ENCODE measurements at regions of chr17 and their contacts with region 1.

Region 1: DNA sequence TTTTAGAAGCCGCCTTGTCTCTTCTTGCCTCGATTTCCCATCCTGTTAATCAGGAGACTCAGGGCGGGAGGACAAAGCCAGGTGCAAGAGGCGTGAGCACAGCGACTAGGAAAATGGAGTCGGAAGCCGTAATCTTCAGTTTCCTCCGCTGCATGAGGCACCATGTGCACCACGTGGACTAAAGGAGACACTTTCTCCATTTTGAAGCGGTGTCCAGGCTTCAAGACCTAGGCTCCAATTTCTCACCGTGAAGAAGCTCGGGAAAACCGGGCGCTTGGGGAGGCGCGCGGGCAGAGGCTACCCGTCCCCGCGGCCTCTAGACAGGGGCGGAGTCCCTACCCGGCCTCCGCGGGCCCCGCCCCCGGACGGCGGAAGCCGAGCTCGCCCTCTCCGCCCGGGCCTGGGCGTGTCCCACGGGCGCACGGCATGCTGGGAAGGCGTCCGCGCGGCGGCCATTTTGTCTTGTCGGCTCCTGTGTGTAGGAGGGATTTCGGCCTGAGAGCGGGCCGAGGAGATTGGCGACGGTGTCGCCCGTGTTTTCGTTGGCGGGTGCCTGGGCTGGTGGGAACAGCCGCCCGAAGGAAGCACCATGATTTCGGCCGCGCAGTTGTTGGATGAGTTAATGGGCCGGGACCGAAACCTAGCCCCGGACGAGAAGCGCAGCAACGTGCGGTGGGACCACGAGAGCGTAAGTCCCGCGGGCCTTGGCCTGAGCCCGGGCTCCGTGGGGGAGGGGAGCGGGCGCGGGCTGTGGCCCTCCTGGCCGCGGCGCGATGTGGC is at the start of gene LUC7L3:
- DNase-seq: peak; percentile 96
- ATAC-seq: peak; percentile 93
- H3K4me3 ChIP-seq: peak within 1 kb of the TSS; percentile 75 to 97 (median 87)
- H3K4me3 Mint-ChIP-seq: peak within 1 kb of the TSS; percentile 98
- H3K27ac ChIP-seq: peak within 1 kb of the TSS; percentile 96 to 97
- H3K27ac Mint-ChIP-seq: peak within 1 kb of the TSS; percentile 99
- H3K4me1 ChIP-seq: peaks cover 31 to 32% of the 10 kb centered on the region in 2 donors
- H3K4me1 Mint-ChIP-seq: peaks cover 36% of the 10 kb centered on the region
- H3K27me3 ChIP-seq: no peaks in the 10 kb centered on the region
- H3K27me3 Mint-ChIP-seq: no peaks in the 10 kb centered on the region
- CTCF ChIP-seq: no peak
- total RNA-seq, gene LUC7L3: 305 and 311 TPM in 2 replicates

Region 2: GRCh38 chr17:50765454-50766221 is 46.3 kb after region 1 on chr17:
- CTCF ChIA-PET with region 1: no interaction called
- POLR2A ChIA-PET with region 1: interaction called, 4 read pairs
- intact Hi-C with region 1: loop called (anchors 5 kb)
- DNase-seq: peak; percentile 53
- ATAC-seq: peak; percentile 50
- H3K4me3 ChIP-seq: peak overlapping the region in 1 of 5 experiments; percentile 15
- H3K4me3 Mint-ChIP-seq: peak overlapping the region; percentile 59
- H3K27ac ChIP-seq: peak overlapping the region; percentile 15 to 35
- H3K27ac Mint-ChIP-seq: peak overlapping the region; percentile 70
- H3K4me1 ChIP-seq: peaks cover 32 to 36% of the 10 kb centered on the region in 2 donors
- H3K4me1 Mint-ChIP-seq: peaks cover 37% of the 10 kb centered on the region
- H3K27me3 ChIP-seq: no peaks in the 10 kb centered on the region
- H3K27me3 Mint-ChIP-seq: no peaks in the 10 kb centered on the region
- CTCF ChIP-seq: no peak

Region 3: DNA sequence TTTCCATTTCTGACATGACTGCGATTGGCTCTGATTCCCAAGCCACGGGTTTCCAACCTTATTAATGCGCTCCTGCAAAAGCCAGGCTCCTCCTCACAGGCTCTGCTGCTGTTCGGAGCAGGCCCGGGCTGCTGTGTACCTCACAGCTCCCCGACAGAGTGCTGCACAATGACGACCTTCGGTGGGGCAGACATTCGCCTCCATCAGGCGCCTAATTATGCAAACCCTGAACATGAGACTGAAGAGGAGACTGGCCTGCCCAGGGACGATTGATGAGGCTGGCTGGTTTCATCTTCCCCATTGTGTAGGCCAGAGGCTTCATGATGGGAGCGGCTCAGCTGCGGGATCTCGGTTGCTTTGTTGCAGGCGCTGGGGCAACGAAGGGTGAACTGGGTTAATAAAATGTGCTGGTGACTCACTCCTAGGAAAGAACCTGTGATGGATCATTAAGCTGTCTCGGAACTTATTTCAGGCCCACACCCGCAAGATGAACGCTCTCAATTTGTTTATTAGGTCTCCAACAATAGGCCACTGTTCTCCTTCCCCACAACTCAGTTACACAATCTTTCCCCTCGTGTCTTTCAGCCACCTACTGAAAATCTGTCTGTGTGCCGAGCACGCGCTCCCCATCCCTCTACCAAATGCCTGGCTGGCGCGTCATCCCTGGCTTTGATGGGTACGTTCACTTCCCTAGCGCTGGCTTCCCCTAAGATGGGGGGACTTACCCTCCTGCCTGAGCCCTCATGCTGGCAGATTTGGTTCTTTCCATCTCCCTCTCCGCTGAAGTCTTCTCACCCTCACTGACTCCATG is 174.1 kb after region 1 on chr17:
- CTCF ChIA-PET with region 1: no interaction called
- POLR2A ChIA-PET with region 1: no interaction called
- intact Hi-C with region 1: no loop called
- DNase-seq: no peak
- ATAC-seq: no peak
- H3K4me3 ChIP-seq: no peak overlapping the region
- H3K4me3 Mint-ChIP-seq: no peak overlapping the region
- H3K27ac ChIP-seq: no peak overlapping the region
- H3K27ac Mint-ChIP-seq: no peak overlapping the region
- H3K4me1 ChIP-seq: no peaks in the 10 kb centered on the region
- H3K4me1 Mint-ChIP-seq: no peaks in the 10 kb centered on the region
- H3K27me3 ChIP-seq: no peaks in the 10 kb centered on the region
- H3K27me3 Mint-ChIP-seq: peaks cover 7% of the 10 kb centered on the region
- CTCF ChIP-seq: no peak